Ovary (tissue), 10 donors: ENCODE measurements at regions of chr19 and their contacts with region 1.

Region 1: DNA sequence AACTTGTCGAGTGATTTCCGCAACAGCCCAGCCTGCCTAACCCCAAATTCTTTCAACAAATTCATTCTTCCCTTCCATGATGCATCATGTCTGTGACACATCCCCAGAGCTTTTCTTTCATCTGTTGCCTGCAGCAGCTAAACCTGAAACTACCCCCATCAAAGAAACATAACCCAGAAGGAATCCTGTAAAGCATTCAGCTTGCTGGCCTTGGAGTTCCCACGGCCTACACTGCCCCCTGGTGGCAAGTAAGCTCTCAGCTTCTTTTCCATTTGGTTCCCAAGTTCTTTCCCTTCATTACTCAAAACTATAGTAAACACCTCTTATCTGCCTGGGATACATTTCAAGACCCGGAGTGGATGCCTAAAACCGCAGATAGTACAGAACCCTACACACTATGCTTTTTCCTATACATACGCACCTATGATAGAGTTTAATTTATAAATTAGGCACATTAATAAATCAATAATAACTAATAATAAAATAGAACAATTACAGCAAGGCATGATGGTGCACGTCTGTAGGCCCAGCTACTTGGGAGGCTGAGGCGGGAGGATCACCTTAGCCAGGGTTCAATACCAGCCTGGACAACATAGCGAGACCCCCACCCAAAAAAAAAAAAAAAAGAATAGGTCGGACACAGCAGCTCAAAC is 7.4 kb downstream of the ETHE1 start:
- DNase-seq: peak; percentile 72 to 87 (median 84)
- H3K4me3 ChIP-seq: no peak overlapping the region
- H3K27ac ChIP-seq: no peak overlapping the region
- H3K4me1 ChIP-seq: no peaks in the 10 kb centered on the region
- H3K27me3 ChIP-seq: no peaks in the 10 kb centered on the region
- CTCF ChIP-seq: peak; percentile 79 to 89 (median 85)
- EP300 ChIP-seq: no peak
- POLR2A ChIP-seq: no peak

Region 2: DNA sequence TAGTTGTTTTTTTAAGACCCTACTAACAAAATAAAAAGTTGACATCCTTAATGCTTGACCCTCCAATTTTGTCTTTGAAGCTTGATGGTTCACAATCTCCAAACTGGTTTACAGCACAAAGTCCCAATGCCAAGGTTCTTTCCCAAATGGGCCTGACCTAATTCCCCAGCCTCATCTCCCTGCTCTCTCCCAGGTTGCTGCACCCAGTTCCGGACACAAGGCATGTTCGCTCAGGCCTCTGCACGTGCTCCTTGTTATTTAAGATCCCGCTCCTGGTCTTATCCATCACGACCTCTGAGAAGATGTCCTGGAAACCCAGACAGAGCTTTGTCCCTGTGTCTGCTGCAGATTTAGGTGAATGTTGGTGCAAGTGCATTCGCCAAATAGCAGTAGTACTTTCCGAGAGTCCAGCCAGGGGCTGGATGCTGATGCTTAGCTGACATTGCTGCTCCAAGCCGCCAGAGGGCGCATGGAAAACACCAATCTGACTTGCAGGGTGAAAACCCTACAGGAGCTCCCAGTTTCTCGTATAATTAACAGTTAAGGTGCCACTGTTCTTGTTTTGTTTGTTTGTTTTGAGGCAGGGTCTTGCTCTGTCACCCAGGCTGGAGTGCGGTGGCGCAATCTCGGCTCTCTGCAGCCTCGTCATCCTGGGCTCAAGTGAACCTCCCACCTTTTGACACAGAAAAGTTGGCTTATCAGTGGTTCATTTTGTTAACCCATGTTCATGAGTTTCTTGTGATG is 72.6 kb before region 1 on chr19:
- intact Hi-C with region 1: loop called (anchors 1 to 2 kb)
- DNase-seq: peak; percentile 69 to 85 (median 82)
- H3K4me3 ChIP-seq: no peak overlapping the region
- H3K27ac ChIP-seq: no peak overlapping the region
- H3K4me1 ChIP-seq: no peaks in the 10 kb centered on the region
- H3K27me3 ChIP-seq: no peaks in the 10 kb centered on the region
- CTCF ChIP-seq: peak; percentile 70 to 94 (median 91)
- EP300 ChIP-seq: no peak
- POLR2A ChIP-seq: no peak